ENCODE measurements at regions of chr4 and their contacts with region 1.

Region 1: DNA sequence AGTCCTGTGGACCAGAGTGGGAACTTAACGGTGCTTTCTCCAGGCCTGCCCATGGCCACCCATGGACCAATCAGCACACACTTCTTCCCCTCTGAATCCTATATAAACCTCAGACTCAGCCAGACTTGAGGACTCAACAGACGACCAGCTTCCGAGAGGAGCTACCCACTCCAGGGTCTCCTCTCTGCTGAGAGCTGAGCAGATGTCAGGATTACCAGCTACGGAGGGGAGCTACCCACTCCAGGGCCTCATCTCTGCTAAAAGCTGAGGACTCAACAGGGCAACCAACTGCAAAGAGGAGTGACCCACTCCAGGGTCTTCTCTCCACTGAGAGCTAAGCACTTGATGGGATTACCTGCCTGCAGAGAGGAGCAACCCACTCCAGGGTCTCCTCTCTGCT is 80.0 kb upstream of the DDX60 start:
- DNase-seq: no peak
- H3K4me3 Mint-ChIP-seq: no peak overlapping the region
- H3K27ac Mint-ChIP-seq: no peak overlapping the region
- H3K4me1 Mint-ChIP-seq: peaks cover 3% of the 10 kb centered on the region
- H3K27me3 Mint-ChIP-seq: no peaks in the 10 kb centered on the region

Region 2: GRCh38 chr4:168200687-168201086 is 197.9 kb before region 1 on chr4:
- intact Hi-C with region 1: loop called (anchors 10 kb)
- DNase-seq: no peak
- H3K4me3 Mint-ChIP-seq: no peak overlapping the region
- H3K27ac Mint-ChIP-seq: no peak overlapping the region
- H3K4me1 Mint-ChIP-seq: no peaks in the 10 kb centered on the region
- H3K27me3 Mint-ChIP-seq: no peaks in the 10 kb centered on the region

Measured in activated CD4-positive, alpha-beta T cell treated with anti-CD3 and anti-CD28 coated beads, Interleukin-2, amount 10 ng/mL, durations not matched to agents 24 days and 14 days (primary cell).